ENCODE measurements at regions of chrX and their contacts with region 1.

Region 1: GRCh38 chrX:13487731-13488523 is 81.5 kb upstream of the EGFL6 start:
- DNase-seq: peak in 30 of 35 experiments; percentile 3 to 75 (median 28)
- ATAC-seq: peak; percentile 58 to 84 (median 66)
- H3K4me3 ChIP-seq: no peak overlapping the region
- H3K4me3 Mint-ChIP-seq: no peak overlapping the region
- H3K27ac ChIP-seq: peak overlapping the region; percentile 57
- H3K27ac Mint-ChIP-seq: peak overlapping the region; percentile 77 to 84
- H3K4me1 ChIP-seq: peaks cover 5 to 25% of the 10 kb centered on the region in 2 experiments
- H3K4me1 Mint-ChIP-seq: peaks cover 19 to 46% (median 28%) of the 10 kb centered on the region in 3 donors
- H3K27me3 ChIP-seq: no peaks in the 10 kb centered on the region
- H3K27me3 Mint-ChIP-seq: peaks cover 0 to 29% of the 10 kb centered on the region in 2 donors

Region 2: DNA sequence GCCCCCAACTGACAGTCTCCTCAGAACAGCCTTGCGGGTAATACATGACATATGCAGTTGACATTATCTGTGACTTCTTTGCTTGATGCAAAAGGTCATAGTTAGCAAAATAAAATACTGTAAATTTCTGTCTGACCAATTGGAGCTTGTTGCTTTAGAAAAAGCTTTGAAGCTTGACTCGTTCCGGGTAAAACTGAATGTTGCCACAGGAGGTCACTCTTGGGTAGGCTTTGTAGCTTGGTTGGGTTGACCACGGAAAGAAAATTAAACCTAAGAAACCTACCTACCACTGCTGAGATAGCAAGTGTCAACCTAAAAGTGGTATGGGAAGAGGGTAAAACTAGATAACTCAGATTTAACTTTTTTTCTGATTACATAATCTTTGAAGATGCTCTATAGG is 673.5 kb before region 1 on chrX:
- CTCF ChIA-PET with region 1: interaction called in 1 of 2 experiments, 12 read pairs
- POLR2A ChIA-PET with region 1: interaction called in 1 of 2 experiments, 3 read pairs
- DNase-seq: peak in 27 of 35 experiments; percentile 2 to 61 (median 25)
- ATAC-seq: peak in 2 of 4 experiments; percentile 31 to 50
- H3K4me3 ChIP-seq: no peak overlapping the region
- H3K4me3 Mint-ChIP-seq: no peak overlapping the region
- H3K27ac ChIP-seq: no peak overlapping the region
- H3K27ac Mint-ChIP-seq: no peak overlapping the region
- H3K4me1 ChIP-seq: no peaks in the 10 kb centered on the region
- H3K4me1 Mint-ChIP-seq: peaks cover 0 to 5% (median 0%) of the 10 kb centered on the region in 3 donors
- H3K27me3 ChIP-seq: no peaks in the 10 kb centered on the region
- H3K27me3 Mint-ChIP-seq: peaks cover 0 to 8% of the 10 kb centered on the region in 2 donors

Region 3: DNA sequence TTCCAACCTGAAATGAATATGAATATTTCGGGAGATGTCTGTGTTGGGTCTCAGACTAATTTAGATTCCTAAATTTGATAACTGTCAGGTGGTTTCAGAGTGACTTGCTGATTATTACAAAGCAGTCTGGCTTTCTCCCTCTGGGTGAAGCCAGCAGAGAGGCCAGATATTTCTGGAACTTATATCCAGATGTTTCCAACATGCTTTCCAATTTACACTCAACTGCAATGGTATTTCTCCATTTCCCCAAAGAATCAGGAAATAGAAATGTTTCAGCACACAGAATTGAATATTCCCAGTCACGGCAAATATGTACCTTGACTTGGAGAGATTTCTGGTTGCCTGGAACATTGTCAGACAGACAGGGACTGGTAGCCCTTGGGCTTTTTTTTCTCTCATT is 33.0 kb after region 1 on chrX:
- CTCF ChIA-PET with region 1: no interaction called
- POLR2A ChIA-PET with region 1: no interaction called
- DNase-seq: no peak
- ATAC-seq: no peak
- H3K4me3 ChIP-seq: no peak overlapping the region
- H3K4me3 Mint-ChIP-seq: no peak overlapping the region
- H3K27ac ChIP-seq: no peak overlapping the region
- H3K27ac Mint-ChIP-seq: no peak overlapping the region
- H3K4me1 ChIP-seq: no peaks in the 10 kb centered on the region
- H3K4me1 Mint-ChIP-seq: no peaks in the 10 kb centered on the region
- H3K27me3 ChIP-seq: no peaks in the 10 kb centered on the region
- H3K27me3 Mint-ChIP-seq: peaks cover 0 to 46% of the 10 kb centered on the region in 2 donors

Region 4: GRCh38 chrX:13598877-13599276 is 111.0 kb after region 1 on chrX:
- CTCF ChIA-PET with region 1: no interaction called
- POLR2A ChIA-PET with region 1: no interaction called
- DNase-seq: no peak
- ATAC-seq: no peak
- H3K4me3 ChIP-seq: no peak overlapping the region
- H3K4me3 Mint-ChIP-seq: no peak overlapping the region
- H3K27ac ChIP-seq: no peak overlapping the region
- H3K27ac Mint-ChIP-seq: no peak overlapping the region
- H3K4me1 ChIP-seq: no peaks in the 10 kb centered on the region
- H3K4me1 Mint-ChIP-seq: no peaks in the 10 kb centered on the region
- H3K27me3 ChIP-seq: peaks cover 0 to 3% of the 10 kb centered on the region in 2 experiments
- H3K27me3 Mint-ChIP-seq: peaks cover 2 to 50% of the 10 kb centered on the region in 2 donors

Measured in T-cell (primary cell).